ENCODE measurements at regions of chr2 and their contacts with region 1.

Region 1: DNA sequence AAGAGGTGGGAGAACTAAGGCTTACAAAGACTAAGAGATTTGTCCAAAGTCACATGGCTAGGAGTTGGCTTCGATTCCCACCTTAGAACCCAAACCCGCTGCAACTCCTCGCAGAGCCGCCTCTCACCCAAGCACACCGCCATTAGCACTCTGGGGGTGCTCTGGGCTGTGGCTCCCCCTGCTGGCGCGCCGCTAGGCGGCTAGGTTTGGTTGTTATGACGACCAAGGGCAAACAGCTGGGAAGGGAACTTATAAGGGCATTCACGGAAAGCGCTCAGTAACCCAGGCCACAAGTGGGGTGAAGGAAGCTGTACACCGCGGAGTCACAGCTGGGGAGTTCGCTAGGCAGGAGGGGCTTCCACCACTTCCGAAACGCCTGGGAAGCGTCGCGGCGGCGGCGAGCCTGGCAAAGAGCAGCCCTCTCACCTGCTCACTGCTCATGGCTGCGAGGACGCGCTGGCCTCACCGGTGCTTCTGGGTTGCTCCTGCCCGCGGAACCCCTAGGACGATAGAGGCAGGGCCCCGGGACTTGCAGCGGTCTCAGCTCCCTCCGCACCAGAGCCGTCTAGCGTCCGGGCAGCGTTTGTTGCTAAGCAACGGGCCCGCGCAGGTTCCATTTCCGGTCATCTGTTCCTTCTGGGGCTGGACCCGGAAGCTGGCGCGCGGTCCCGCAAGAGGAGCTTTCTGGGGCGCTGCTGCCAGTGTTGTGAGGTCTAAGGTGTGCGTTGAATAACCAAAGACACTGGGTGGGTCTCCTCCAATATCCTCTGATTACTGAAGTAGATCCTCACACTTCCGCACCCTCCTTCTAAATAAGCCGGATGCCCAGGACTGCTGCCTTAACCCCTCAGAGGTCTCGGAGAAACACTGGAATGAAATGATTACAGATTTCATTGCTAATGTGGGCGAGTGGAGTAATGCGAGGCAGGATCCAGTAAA is at the start of gene DNAH7:
- DNase-seq: peak; percentile 96
- ATAC-seq: peak; percentile 93
- H3K4me3 Mint-ChIP-seq: peak within 1 kb of the TSS; percentile 76
- H3K27ac Mint-ChIP-seq: peak within 1 kb of the TSS; percentile 75
- H3K4me1 Mint-ChIP-seq: peaks cover 18% of the 10 kb centered on the region
- H3K27me3 Mint-ChIP-seq: peaks cover 12% of the 10 kb centered on the region
- total RNA-seq, gene DNAH7: 0.20 TPM in 1 of 2 experiments, not detected in the other

Region 2: GRCh38 chr2:195533771-195534642 is 534.5 kb before region 1 on chr2:
- CTCF ChIA-PET with region 1: interaction called, 12 read pairs
- DNase-seq: peak; percentile 88
- ATAC-seq: peak; percentile 63
- H3K4me3 Mint-ChIP-seq: peak overlapping the region; percentile 77
- H3K27ac Mint-ChIP-seq: peak overlapping the region; percentile 96
- H3K4me1 Mint-ChIP-seq: peaks cover 73% of the 10 kb centered on the region
- H3K27me3 Mint-ChIP-seq: no peaks in the 10 kb centered on the region

Region 3: DNA sequence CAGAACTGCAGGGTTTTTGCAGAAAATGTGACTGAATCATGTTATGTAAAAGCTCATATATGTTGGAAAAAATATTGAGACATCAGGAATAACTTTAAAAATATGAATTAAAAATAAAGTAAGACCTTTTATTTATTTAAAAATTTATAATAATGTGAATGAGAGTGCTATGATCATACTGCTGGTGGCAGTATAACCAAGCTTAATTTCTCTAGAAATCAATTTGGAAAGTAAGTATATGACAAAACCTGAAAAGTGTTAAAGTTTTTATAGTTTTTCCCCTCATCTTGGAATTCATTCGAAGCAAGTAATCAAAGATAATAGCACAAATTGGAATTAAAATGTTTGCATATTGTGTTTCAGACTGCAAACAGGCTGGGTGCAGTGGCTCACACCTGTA is 404.0 kb before region 1 on chr2:
- CTCF ChIA-PET with region 1: interaction called, 22 read pairs
- DNase-seq: no peak
- ATAC-seq: no peak
- H3K4me3 Mint-ChIP-seq: no peak overlapping the region
- H3K27ac Mint-ChIP-seq: no peak overlapping the region
- H3K4me1 Mint-ChIP-seq: peaks cover 20% of the 10 kb centered on the region
- H3K27me3 Mint-ChIP-seq: no peaks in the 10 kb centered on the region

Region 4: GRCh38 chr2:196314780-196315179 is 246.2 kb after region 1 on chr2:
- CTCF ChIA-PET with region 1: no interaction called
- DNase-seq: no peak
- ATAC-seq: no peak
- H3K4me3 Mint-ChIP-seq: no peak overlapping the region
- H3K27ac Mint-ChIP-seq: no peak overlapping the region
- H3K4me1 Mint-ChIP-seq: peaks cover 5% of the 10 kb centered on the region
- H3K27me3 Mint-ChIP-seq: peaks cover 2% of the 10 kb centered on the region

Region 5: GRCh38 chr2:196337208-196337953 is 268.8 kb after region 1 on chr2:
- CTCF ChIA-PET with region 1: interaction called, 24 read pairs
- DNase-seq: no peak
- ATAC-seq: no peak
- H3K4me3 Mint-ChIP-seq: no peak overlapping the region
- H3K27ac Mint-ChIP-seq: no peak overlapping the region
- H3K4me1 Mint-ChIP-seq: peaks cover 9% of the 10 kb centered on the region
- H3K27me3 Mint-ChIP-seq: peaks cover 6% of the 10 kb centered on the region

Region 6: GRCh38 chr2:196453613-196454047 is 385.1 kb after region 1 on chr2:
- CTCF ChIA-PET with region 1: interaction called, 23 read pairs
- DNase-seq: peak; percentile 60
- ATAC-seq: peak; percentile 47
- H3K4me3 Mint-ChIP-seq: no peak overlapping the region
- H3K27ac Mint-ChIP-seq: no peak overlapping the region
- H3K4me1 Mint-ChIP-seq: peaks cover 4% of the 10 kb centered on the region
- H3K27me3 Mint-ChIP-seq: peaks cover 39% of the 10 kb centered on the region